Heart right ventricle (tissue), 16 donors: ENCODE measurements at regions of chr1 and their contacts with region 1.

Region 1: DNA sequence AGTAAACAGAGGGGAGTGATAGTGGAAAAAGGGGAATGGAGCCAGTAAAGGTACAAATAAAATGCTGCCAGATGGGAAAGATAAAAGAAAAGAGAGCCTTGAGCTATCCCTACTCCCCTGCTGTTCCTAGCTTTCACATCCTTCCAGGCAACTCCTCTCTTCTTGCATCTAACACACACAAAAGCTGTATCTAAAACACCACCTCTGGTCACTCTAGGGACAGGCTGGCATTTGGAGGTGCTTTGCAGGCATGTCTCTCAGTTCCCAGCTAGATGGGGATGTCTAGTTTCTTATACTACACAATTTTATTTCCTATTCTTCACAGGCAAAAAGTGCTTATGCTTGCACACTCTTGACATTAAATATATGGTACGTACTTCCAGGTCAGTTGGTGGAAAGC is 185.1 kb upstream of the ST6GALNAC5 start:
- DNase-seq: no peak
- ATAC-seq: no peak
- H3K4me3 ChIP-seq: no peak overlapping the region
- H3K27ac ChIP-seq: no peak overlapping the region
- H3K4me1 ChIP-seq: no peaks in the 10 kb centered on the region
- H3K27me3 ChIP-seq: no peaks in the 10 kb centered on the region
- CTCF ChIP-seq: no peak

Region 2: GRCh38 chr1:75614399-75614756 is 1067.8 kb before region 1 on chr1:
- intact Hi-C with region 1: loop called in 1 of 10 experiments (anchors 5 kb)
- DNase-seq: no peak
- ATAC-seq: peak in 3 of 8 donors; percentile 14 to 47 (median 36)
- H3K4me3 ChIP-seq: peak overlapping the region; percentile 9 to 63 (median 50)
- H3K27ac ChIP-seq: no peak overlapping the region
- H3K4me1 ChIP-seq: peaks cover 3 to 24% (median 16%) of the 10 kb centered on the region in 9 donors
- H3K27me3 ChIP-seq: peaks cover 0 to 69% (median 59%) of the 10 kb centered on the region in 7 donors
- CTCF ChIP-seq: no peak